ENCODE measurements at regions of chr5 and their contacts with region 1.

Region 1: GRCh38 chr5:133111299-133111698 is 59.5 kb downstream of the HSPA4 start:
- DNase-seq: peak; percentile 63
- H3K4me3 ChIP-seq: no peak overlapping the region
- H3K27ac ChIP-seq: no peak overlapping the region
- H3K27me3 ChIP-seq: peaks cover 3% of the 10 kb centered on the region
- CTCF ChIP-seq: peak; percentile 95

Region 2: GRCh38 chr5:132971478-132972435 is 139.5 kb before region 1 on chr5:
- CTCF ChIA-PET with region 1: no interaction called
- POLR2A ChIA-PET with region 1: no interaction called
- DNase-seq: no peak
- H3K4me3 ChIP-seq: no peak overlapping the region
- H3K27ac ChIP-seq: no peak overlapping the region
- H3K27me3 ChIP-seq: no peaks in the 10 kb centered on the region
- CTCF ChIP-seq: no peak

Region 3: DNA sequence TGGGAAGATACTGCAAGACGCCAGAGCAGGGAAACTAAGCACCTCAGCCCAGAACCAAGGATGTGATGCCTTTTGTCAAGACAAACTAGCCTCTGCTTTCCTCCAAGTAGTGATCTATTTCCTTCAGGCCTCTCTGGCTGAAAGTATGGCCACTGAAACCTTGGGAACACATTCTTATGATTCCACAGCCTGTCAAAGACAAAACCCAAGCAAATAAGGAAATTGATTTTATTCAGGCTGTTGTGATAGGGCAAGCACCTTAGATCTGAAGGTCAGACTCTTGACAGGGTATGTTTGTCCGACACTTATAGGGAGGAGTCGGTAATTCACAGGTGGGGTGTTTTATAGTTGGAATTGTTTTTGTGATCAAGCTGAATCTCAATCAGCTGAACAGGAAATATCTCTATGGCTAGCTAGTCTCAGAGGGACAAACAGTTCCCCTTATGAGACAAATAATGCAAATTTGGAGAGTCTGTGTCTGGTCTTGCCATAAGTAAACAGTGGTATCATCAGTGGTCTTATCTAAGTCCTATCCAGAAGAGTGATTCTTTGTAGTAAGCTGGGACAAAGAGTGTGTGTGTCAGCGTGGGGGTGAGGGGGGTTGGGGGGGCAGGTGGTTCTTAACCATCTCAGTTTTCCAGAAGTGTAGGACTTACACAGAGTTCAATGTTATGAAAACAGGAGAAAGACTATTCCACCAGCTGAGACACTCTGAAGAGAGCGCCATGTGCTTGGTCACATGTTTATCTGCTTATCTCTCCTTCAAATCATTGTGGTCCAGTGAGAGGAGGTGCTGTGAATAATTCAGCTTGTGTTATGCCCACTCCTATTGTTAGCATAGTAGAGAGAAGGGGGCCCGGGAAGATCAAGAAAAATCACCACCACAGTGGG is 78.2 kb before region 1 on chr5:
- CTCF ChIA-PET with region 1: no interaction called
- POLR2A ChIA-PET with region 1: no interaction called
- DNase-seq: no peak
- H3K4me3 ChIP-seq: no peak overlapping the region
- H3K27ac ChIP-seq: no peak overlapping the region
- H3K27me3 ChIP-seq: no peaks in the 10 kb centered on the region
- CTCF ChIP-seq: no peak

Region 4: GRCh38 chr5:133247881-133248624 is 136.8 kb after region 1 on chr5:
- CTCF ChIA-PET with region 1: interaction called, 68 read pairs
- POLR2A ChIA-PET with region 1: no interaction called
- DNase-seq: no peak
- H3K4me3 ChIP-seq: no peak overlapping the region
- H3K27ac ChIP-seq: no peak overlapping the region
- H3K27me3 ChIP-seq: peaks cover 7% of the 10 kb centered on the region
- CTCF ChIP-seq: peak; percentile 59

Region 5: GRCh38 chr5:133260715-133261114 is 149.4 kb after region 1 on chr5:
- CTCF ChIA-PET with region 1: interaction called, 25 read pairs
- POLR2A ChIA-PET with region 1: no interaction called
- DNase-seq: no peak
- H3K4me3 ChIP-seq: no peak overlapping the region
- H3K27ac ChIP-seq: no peak overlapping the region
- H3K27me3 ChIP-seq: peaks cover 46% of the 10 kb centered on the region
- CTCF ChIP-seq: peak; percentile 42

Region 6: DNA sequence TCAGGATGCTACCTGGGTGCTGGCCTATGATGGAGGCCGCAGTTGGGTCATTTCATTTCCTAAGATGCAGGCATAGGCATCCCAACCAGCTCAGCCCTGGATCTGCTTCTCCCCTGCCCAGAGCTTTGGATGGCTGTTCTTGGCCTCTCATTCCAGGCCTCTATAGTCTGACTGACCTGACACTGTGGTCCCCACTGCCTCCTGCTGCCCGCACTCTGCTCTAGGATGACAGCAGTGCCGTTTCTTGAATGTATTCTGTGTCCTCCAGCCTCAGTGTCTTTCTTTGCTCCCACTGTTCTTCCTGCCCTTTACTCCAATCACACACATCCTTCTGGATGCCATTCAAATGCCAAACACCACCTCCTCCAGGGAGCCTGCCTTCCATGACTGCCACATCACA is 176.2 kb after region 1 on chr5:
- CTCF ChIA-PET with region 1: interaction called, 154 read pairs
- POLR2A ChIA-PET with region 1: no interaction called
- DNase-seq: peak; percentile 26
- H3K4me3 ChIP-seq: no peak overlapping the region
- H3K27ac ChIP-seq: no peak overlapping the region
- H3K27me3 ChIP-seq: peaks cover 11% of the 10 kb centered on the region
- CTCF ChIP-seq: peak; percentile 75

Region 7: DNA sequence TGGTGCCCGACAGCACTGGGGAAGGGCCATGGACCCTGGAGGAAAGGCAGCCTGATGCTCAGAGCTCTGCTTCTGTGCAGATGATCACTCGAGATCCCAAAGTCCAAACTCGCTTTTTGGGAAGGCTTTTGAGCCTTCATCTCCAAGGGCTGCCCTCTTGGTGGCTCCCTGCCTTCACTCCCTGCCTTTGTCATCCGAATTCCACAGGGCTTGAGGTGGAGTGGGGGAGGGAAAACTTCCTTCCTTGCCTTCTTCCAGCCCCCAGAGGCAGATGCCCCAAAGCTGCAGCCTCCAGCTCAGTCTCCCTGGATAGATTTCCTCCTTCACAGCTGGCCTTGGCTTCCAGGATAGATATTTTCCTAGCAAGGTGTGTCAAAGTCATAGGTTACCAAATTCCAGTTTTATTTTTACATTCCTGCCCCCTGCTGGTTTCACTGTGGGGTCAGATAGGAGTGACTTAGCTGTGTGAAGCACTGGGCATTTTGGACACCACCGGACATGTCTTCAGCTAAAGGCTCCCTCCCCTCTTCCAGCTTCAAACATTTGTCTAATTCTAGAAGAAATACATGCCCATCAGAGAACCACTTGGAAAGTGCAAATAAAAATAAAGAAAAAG is 208.7 kb after region 1 on chr5:
- CTCF ChIA-PET with region 1: interaction called, 12 read pairs
- POLR2A ChIA-PET with region 1: no interaction called
- DNase-seq: no peak
- H3K4me3 ChIP-seq: no peak overlapping the region
- H3K27ac ChIP-seq: no peak overlapping the region
- H3K27me3 ChIP-seq: peaks cover 15% of the 10 kb centered on the region
- CTCF ChIP-seq: no peak

Region 8: DNA sequence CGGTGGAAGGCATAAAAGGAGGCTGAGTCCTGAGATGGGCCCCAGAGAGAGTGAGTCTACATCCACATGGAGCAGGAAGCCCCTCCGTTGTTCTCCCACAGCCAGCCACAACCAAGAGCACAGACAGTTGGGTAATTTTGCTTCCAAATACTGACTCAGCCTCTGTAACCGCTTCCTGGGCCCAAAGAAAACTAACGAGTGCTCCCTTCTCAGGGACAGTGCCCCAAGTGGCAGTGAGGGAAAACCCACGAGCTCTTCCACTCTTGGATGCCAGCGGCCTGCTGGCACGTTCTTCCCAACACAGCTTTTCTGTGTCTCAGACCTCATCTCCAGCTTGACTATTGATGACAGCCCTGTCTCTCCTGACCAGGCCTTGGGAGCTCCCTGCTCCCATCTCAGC is 293.4 kb after region 1 on chr5:
- CTCF ChIA-PET with region 1: no interaction called
- POLR2A ChIA-PET with region 1: no interaction called
- DNase-seq: no peak
- H3K4me3 ChIP-seq: no peak overlapping the region
- H3K27ac ChIP-seq: no peak overlapping the region
- H3K27me3 ChIP-seq: peaks cover 8% of the 10 kb centered on the region
- CTCF ChIP-seq: no peak

Region 9: DNA sequence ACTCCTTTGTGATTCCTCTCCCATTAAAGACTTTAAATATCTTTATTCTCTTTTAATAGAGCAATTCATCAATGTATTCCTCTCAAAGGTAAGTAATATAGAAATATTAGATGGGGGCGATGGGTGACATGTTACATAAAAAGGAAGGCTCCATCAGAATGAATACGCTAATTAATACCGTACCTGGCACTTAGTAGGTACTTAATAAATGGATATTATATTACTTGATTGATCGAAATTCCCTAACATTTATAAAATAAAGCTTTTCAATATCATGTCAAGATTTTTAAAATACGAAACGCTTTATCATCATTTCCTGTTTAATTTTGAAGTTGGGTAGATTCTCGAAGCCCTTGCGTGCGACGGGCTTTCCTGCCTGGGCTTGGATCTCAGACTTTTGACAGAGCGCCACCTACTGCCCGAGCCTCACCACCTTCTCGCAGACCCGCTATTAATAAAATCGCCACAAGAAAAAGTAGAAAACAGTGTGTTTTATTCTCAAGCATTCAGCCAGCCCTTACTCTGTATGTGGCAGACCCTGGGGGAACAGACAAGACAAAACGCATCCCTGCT is 757.7 kb after region 1 on chr5:
- CTCF ChIA-PET with region 1: interaction called, 12 read pairs
- POLR2A ChIA-PET with region 1: no interaction called
- DNase-seq: peak; percentile 32
- H3K4me3 ChIP-seq: no peak overlapping the region
- H3K27ac ChIP-seq: no peak overlapping the region
- H3K27me3 ChIP-seq: peaks cover 25% of the 10 kb centered on the region
- CTCF ChIP-seq: peak; percentile 72

Region 10: GRCh38 chr5:133944263-133945185 is 833.2 kb after region 1 on chr5:
- CTCF ChIA-PET with region 1: interaction called, 13 read pairs
- POLR2A ChIA-PET with region 1: no interaction called
- DNase-seq: no peak
- H3K4me3 ChIP-seq: no peak overlapping the region
- H3K27ac ChIP-seq: no peak overlapping the region
- H3K27me3 ChIP-seq: peaks cover 6% of the 10 kb centered on the region
- CTCF ChIP-seq: peak; percentile 70

Measured in AG04450 (cell line).